ENCODE measurements at regions of chr2 and their contacts with region 1.

Region 1: DNA sequence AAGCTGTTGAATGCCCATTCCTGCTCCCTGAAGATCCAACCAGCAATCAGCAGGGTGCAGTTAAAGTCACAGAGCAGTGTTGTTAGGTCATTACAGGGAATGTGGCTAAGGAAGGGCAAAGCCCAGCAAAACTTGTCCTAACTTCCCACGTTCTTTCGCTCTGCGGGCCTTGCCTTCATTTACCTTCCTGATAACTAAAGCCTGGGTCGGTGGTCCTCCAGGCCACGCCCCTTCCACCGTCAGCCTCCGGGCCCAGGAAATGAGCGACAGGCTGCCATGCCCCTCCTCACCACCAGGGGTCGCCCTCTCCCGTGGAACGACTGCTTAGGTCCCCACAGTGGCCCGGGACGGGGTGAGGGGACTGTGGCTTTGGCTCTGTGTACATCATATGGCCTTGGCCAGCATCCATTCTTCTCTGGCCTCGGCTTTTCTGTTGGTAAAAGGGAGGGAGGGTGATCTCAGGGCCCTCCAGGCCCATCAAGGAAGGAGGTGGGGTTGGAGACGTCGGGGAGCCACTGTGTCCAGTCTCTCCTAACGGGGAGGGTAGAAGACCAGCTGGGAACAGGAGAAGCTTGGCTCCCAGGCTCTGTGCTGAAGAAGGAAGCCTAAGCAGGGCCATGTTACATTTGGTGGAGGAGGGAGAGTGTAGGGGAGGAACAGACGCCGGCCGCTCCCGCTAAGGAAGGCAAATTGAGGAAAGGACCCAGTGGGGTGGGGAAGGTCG is 2.2 kb downstream of the SH2D6 start:
- DNase-seq: peak; percentile 91
- ATAC-seq: peak; percentile 77
- H3K4me3 ChIP-seq: peak overlapping the region in 3 of 5 experiments; percentile 18 to 33 (median 18)
- H3K4me3 Mint-ChIP-seq: peak overlapping the region; percentile 84
- H3K27ac ChIP-seq: peak overlapping the region in 1 of 2 donors; percentile 25
- H3K27ac Mint-ChIP-seq: peak overlapping the region; percentile 92
- H3K4me1 ChIP-seq: peaks cover 23 to 32% of the 10 kb centered on the region in 2 donors
- H3K4me1 Mint-ChIP-seq: peaks cover 28% of the 10 kb centered on the region
- H3K27me3 ChIP-seq: no peaks in the 10 kb centered on the region
- H3K27me3 Mint-ChIP-seq: no peaks in the 10 kb centered on the region
- CTCF ChIP-seq: peak; percentile 100

Region 2: GRCh38 chr2:84052043-84052442 is 1368.7 kb before region 1 on chr2:
- CTCF ChIA-PET with region 1: no interaction called
- POLR2A ChIA-PET with region 1: no interaction called
- intact Hi-C with region 1: no loop called
- DNase-seq: no peak
- ATAC-seq: no peak
- H3K4me3 ChIP-seq: no peak overlapping the region
- H3K4me3 Mint-ChIP-seq: no peak overlapping the region
- H3K27ac ChIP-seq: no peak overlapping the region
- H3K27ac Mint-ChIP-seq: no peak overlapping the region
- H3K4me1 ChIP-seq: no peaks in the 10 kb centered on the region
- H3K4me1 Mint-ChIP-seq: no peaks in the 10 kb centered on the region
- H3K27me3 ChIP-seq: no peaks in the 10 kb centered on the region
- H3K27me3 Mint-ChIP-seq: no peaks in the 10 kb centered on the region
- CTCF ChIP-seq: no peak

Region 3: DNA sequence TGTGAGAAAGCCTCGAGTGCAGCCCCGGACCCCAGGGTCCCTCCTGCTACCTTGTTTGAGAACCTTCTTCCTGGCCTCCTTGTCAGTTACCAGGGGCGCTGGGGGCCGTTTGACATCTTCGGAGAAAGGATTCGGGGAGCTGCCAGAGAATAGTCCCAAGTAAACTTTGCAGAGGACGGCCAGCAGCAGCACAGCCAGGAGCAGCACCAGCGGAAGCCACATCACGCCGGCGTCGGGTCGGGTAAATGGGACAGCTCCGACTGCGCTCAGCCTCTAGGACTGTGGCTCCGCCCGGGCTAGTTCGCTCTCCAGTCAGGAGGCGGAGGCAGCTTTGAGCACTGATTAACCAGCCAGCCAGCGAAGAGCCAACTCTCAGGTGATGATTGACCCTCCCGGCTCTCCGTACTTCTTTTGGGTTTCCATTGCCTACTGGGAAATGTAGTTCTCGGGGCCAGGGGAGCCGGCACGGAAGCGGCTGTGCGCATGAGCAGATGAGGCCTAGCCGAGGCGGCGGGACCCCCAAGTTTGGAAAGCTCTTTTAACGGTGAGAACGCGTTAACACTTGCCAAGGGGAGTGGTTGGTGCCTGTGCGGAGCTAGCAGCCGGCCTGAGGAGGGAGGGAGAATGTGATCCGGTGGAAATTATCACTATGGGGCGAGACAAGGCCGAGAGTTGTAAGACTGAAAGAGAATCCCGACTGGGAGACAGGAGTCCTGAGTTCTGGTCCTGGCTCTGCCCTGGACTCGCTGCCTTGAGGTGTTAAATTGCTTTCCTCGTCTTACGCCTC is 66.2 kb before region 1 on chr2 and contains the starts of genes ELMOD3 and RETSAT:
- CTCF ChIA-PET with region 1: interaction called, 4 read pairs
- POLR2A ChIA-PET with region 1: interaction called, 11 read pairs
- intact Hi-C with region 1: no loop called
- DNase-seq: peak; percentile 98
- ATAC-seq: peak; percentile 99
- H3K4me3 ChIP-seq: peak within 1 kb of the TSS; percentile 60 to 100 (median 85)
- H3K4me3 Mint-ChIP-seq: peak within 1 kb of the TSS; percentile 95
- H3K27ac ChIP-seq: peak within 1 kb of the TSS; percentile 81 to 95
- H3K27ac Mint-ChIP-seq: peak within 1 kb of the TSS; percentile 95
- H3K4me1 ChIP-seq: peaks cover 19 to 26% of the 10 kb centered on the region in 2 donors
- H3K4me1 Mint-ChIP-seq: peaks cover 40% of the 10 kb centered on the region
- H3K27me3 ChIP-seq: no peaks in the 10 kb centered on the region
- H3K27me3 Mint-ChIP-seq: no peaks in the 10 kb centered on the region
- CTCF ChIP-seq: no peak
- total RNA-seq, gene ELMOD3: 34.0 and 34.3 TPM in 2 replicates
- total RNA-seq, gene RETSAT: 23.8 and 28.1 TPM in 2 replicates

Region 4: GRCh38 chr2:85409845-85410583 is 10.7 kb before region 1 on chr2 and contains the start of gene CAPG:
- CTCF ChIA-PET with region 1: interaction called, 27 read pairs
- POLR2A ChIA-PET with region 1: interaction called, 12 read pairs
- intact Hi-C with region 1: loop called (anchors 1 kb)
- DNase-seq: peak; percentile 82
- ATAC-seq: peak; percentile 78
- H3K4me3 ChIP-seq: peak within 1 kb of the TSS; percentile 43 to 75 (median 57)
- H3K4me3 Mint-ChIP-seq: peak within 1 kb of the TSS; percentile 90
- H3K27ac ChIP-seq: peak within 1 kb of the TSS; percentile 71 to 84
- H3K27ac Mint-ChIP-seq: peak within 1 kb of the TSS; percentile 91
- H3K4me1 ChIP-seq: peaks cover 73 to 84% of the 10 kb centered on the region in 2 donors
- H3K4me1 Mint-ChIP-seq: peaks cover 76% of the 10 kb centered on the region
- H3K27me3 ChIP-seq: no peaks in the 10 kb centered on the region
- H3K27me3 Mint-ChIP-seq: no peaks in the 10 kb centered on the region
- CTCF ChIP-seq: no peak
- total RNA-seq, gene CAPG: 179 and 210 TPM in 2 replicates

Region 5: GRCh38 chr2:85551698-85552678 is 131.3 kb after region 1 on chr2:
- CTCF ChIA-PET with region 1: interaction called, 299 read pairs
- POLR2A ChIA-PET with region 1: interaction called, 18 read pairs
- intact Hi-C with region 1: loop called (anchors 1 kb)
- DNase-seq: peak; percentile 90
- ATAC-seq: peak; percentile 97
- H3K4me3 ChIP-seq: no peak overlapping the region
- H3K4me3 Mint-ChIP-seq: no peak overlapping the region
- H3K27ac ChIP-seq: no peak overlapping the region
- H3K27ac Mint-ChIP-seq: peak overlapping the region; percentile 81
- H3K4me1 ChIP-seq: peaks cover 0 to 3% of the 10 kb centered on the region in 2 donors
- H3K4me1 Mint-ChIP-seq: peaks cover 4% of the 10 kb centered on the region
- H3K27me3 ChIP-seq: no peaks in the 10 kb centered on the region
- H3K27me3 Mint-ChIP-seq: no peaks in the 10 kb centered on the region
- CTCF ChIP-seq: peak; percentile 91

Region 6: GRCh38 chr2:85595301-85596025 is 174.8 kb after region 1 on chr2 and contains the start of gene RNF181:
- CTCF ChIA-PET with region 1: interaction called, 3 read pairs
- POLR2A ChIA-PET with region 1: interaction called, 5 read pairs
- intact Hi-C with region 1: loop called (anchors 1 kb)
- DNase-seq: peak; percentile 94
- ATAC-seq: peak; percentile 100
- H3K4me3 ChIP-seq: peak within 1 kb of the TSS; percentile 65 to 93 (median 86)
- H3K4me3 Mint-ChIP-seq: peak within 1 kb of the TSS; percentile 92
- H3K27ac ChIP-seq: peak within 1 kb of the TSS; percentile 76 to 81
- H3K27ac Mint-ChIP-seq: peak within 1 kb of the TSS; percentile 95
- H3K4me1 ChIP-seq: peaks cover 17 to 23% of the 10 kb centered on the region in 2 donors
- H3K4me1 Mint-ChIP-seq: peaks cover 29% of the 10 kb centered on the region
- H3K27me3 ChIP-seq: no peaks in the 10 kb centered on the region
- H3K27me3 Mint-ChIP-seq: no peaks in the 10 kb centered on the region
- CTCF ChIP-seq: no peak
- total RNA-seq, gene RNF181: 67.3 and 76.6 TPM in 2 replicates

Region 7: GRCh38 chr2:85707304-85707703 is 286.6 kb after region 1 on chr2:
- CTCF ChIA-PET with region 1: interaction called, 5 read pairs
- POLR2A ChIA-PET with region 1: no interaction called
- intact Hi-C with region 1: loop called (anchors 1 kb)
- DNase-seq: peak; percentile 90
- ATAC-seq: peak; percentile 71
- H3K4me3 ChIP-seq: no peak overlapping the region
- H3K4me3 Mint-ChIP-seq: peak overlapping the region; percentile 40
- H3K27ac ChIP-seq: no peak overlapping the region
- H3K27ac Mint-ChIP-seq: peak overlapping the region; percentile 38
- H3K4me1 ChIP-seq: peaks cover 39 to 44% of the 10 kb centered on the region in 2 donors
- H3K4me1 Mint-ChIP-seq: peaks cover 39% of the 10 kb centered on the region
- H3K27me3 ChIP-seq: peaks cover 0 to 9% (median 0%) of the 10 kb centered on the region in 4 experiments
- H3K27me3 Mint-ChIP-seq: peaks cover 16% of the 10 kb centered on the region
- CTCF ChIP-seq: peak; percentile 94

Measured in B cell (primary cell).